ENCODE measurements at regions of chr1 and their contacts with region 1.

Region 1: GRCh38 chr1:226656601-226657277 is 82.3 kb downstream of the ITPKB start:
- DNase-seq: peak; percentile 98
- H3K4me3 Mint-ChIP-seq: peak overlapping the region; percentile 45
- H3K27ac Mint-ChIP-seq: peak overlapping the region; percentile 75
- H3K4me1 Mint-ChIP-seq: peaks cover 32% of the 10 kb centered on the region
- H3K27me3 Mint-ChIP-seq: no peaks in the 10 kb centered on the region
- CTCF ChIP-seq: no peak

Region 2: DNA sequence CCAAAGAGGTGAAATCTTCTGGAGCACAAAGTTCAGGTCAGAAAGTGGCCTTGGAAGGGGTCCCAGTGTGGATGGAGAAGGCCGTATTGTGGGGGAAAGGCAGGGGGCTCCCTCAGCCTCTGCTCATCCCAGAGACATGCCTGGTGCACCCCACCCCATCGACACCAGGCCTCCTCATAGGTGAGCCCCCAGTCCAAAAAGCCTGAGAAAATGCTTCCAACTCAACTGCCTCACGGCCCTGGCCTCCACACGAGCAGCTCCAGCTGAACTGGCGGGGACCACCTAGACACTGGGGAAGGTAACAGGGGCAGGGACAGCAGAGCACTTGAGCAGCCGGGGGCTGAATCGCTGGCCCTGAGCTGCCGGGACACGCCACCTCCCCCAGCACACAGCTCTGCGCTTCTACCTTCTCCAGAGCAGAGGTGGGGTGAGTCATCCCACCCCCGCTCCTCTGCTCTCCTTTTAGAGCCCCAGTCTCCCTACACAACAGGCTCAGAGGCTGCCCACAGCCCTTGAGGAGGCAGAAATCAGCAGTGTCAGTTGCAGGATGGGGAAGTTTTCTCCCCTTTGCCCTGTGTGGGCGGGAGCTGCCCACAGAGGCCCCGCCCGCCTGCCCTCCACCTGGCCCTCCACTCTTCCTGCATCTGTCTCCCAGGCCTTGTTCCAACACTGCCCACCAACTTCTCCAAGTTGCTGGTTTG is 13.7 kb before region 1 on chr1:
- CTCF ChIA-PET with region 1: interaction called, 5 read pairs
- POLR2A ChIA-PET with region 1: interaction called, 11 read pairs
- intact Hi-C with region 1: no loop called
- DNase-seq: peak; percentile 95
- H3K4me3 Mint-ChIP-seq: no peak overlapping the region
- H3K27ac Mint-ChIP-seq: peak overlapping the region; percentile 43
- H3K4me1 Mint-ChIP-seq: peaks cover 9% of the 10 kb centered on the region
- H3K27me3 Mint-ChIP-seq: no peaks in the 10 kb centered on the region
- CTCF ChIP-seq: no peak

Region 3: GRCh38 chr1:226679853-226680516 is 23.2 kb after region 1 on chr1:
- CTCF ChIA-PET with region 1: interaction called, 12 read pairs
- POLR2A ChIA-PET with region 1: interaction called, 47 read pairs
- intact Hi-C with region 1: no loop called
- DNase-seq: no peak
- H3K4me3 Mint-ChIP-seq: no peak overlapping the region
- H3K27ac Mint-ChIP-seq: no peak overlapping the region
- H3K4me1 Mint-ChIP-seq: peaks cover 24% of the 10 kb centered on the region
- H3K27me3 Mint-ChIP-seq: no peaks in the 10 kb centered on the region
- CTCF ChIP-seq: no peak

Region 4: GRCh38 chr1:226708342-226708780 is 51.6 kb after region 1 on chr1:
- CTCF ChIA-PET with region 1: interaction called, 6 read pairs
- POLR2A ChIA-PET with region 1: interaction called, 29 read pairs
- intact Hi-C with region 1: loop called (anchors 5 kb)
- DNase-seq: peak; percentile 93
- H3K4me3 Mint-ChIP-seq: peak overlapping the region; percentile 19
- H3K27ac Mint-ChIP-seq: peak overlapping the region; percentile 91
- H3K4me1 Mint-ChIP-seq: peaks cover 29% of the 10 kb centered on the region
- H3K27me3 Mint-ChIP-seq: no peaks in the 10 kb centered on the region
- CTCF ChIP-seq: no peak